Activated CD4-positive, alpha-beta memory T cell treated with anti-CD3 and anti-CD28 coated beads, Interleukin-2, amount 10 ng/mL, durations not matched to agents 7 days and 5 days (primary cell): ENCODE measurements at regions of chr2 and their contacts with region 1.

Region 1: DNA sequence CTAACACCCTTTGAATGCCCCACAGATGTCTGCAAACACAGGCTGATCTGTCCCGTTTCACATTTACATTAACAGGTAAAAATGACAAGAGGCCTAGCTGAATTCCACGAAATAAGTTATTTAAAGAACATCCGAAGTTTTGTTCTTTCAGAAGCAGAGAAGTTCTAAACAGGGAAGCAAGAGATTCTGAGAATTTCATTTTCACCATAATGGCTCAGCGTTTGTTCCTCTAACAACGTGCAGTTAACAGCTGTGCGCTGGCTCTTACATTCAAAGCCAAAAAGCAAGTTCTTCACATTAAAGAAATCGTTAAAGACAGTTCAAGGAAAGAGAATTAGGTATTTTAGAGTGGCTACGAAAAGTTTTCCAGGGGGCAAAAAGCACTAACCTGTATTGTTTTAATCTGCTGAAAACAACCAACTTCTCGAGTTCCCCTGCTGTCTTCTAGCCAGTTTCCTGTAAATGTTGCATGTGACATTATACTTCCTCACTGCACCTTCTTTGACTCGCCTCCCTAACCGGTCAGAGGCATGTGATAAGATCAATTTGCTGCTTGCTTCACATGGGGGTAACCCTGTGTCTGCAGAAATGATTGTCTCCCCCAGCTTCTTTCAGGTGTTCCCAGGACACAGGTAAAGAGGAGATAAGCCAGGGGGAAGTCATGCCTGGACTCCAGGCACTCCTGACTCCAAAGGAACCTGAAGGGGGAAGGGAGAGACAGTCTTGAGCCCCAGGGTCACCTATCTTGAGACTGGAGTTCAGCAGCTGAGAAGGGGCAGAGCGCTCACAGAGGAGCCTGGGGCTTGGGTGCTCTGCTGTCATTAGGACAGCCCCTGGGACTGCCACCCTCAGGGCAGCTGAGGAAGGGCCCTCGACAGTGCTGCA is 36.8 kb upstream of the WIPF1 start:
- DNase-seq: peak; percentile 64
- H3K4me3 Mint-ChIP-seq: peak overlapping the region; percentile 84
- H3K27ac Mint-ChIP-seq: peak overlapping the region; percentile 93
- H3K4me1 Mint-ChIP-seq: peaks cover 66% of the 10 kb centered on the region
- H3K27me3 Mint-ChIP-seq: no peaks in the 10 kb centered on the region

Region 2: GRCh38 chr2:174473796-174474195 is 160.6 kb before region 1 on chr2:
- CTCF ChIA-PET with region 1: no interaction called
- POLR2A ChIA-PET with region 1: no interaction called
- DNase-seq: no peak
- H3K4me3 Mint-ChIP-seq: no peak overlapping the region
- H3K27ac Mint-ChIP-seq: no peak overlapping the region
- H3K4me1 Mint-ChIP-seq: peaks cover 2% of the 10 kb centered on the region
- H3K27me3 Mint-ChIP-seq: no peaks in the 10 kb centered on the region

Region 3: DNA sequence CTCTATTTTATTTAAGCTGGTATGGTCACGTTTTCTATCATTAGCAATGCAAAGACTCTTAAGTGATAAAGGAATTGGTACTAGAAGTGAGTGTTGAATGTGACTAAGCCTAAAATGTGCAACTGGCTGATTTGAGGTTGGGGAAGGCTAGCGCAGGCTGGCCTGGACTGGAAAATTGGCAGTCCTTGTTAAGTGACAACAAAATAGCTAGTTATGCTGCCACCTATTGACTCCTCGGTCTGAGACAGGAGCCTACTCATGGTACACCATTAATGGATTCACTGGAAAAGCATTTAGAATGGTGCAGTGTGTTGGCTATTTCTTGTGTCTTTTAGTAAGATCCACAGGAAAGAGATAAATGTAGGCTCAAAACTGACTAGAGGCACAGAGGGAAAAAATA is 31.1 kb before region 1 on chr2:
- CTCF ChIA-PET with region 1: interaction called, 82 read pairs
- POLR2A ChIA-PET with region 1: interaction called, 558 read pairs
- DNase-seq: peak; percentile 64
- H3K4me3 Mint-ChIP-seq: no peak overlapping the region
- H3K27ac Mint-ChIP-seq: peak overlapping the region; percentile 56
- H3K4me1 Mint-ChIP-seq: peaks cover 90% of the 10 kb centered on the region
- H3K27me3 Mint-ChIP-seq: no peaks in the 10 kb centered on the region

Region 4: GRCh38 chr2:174654419-174654941 is 20.1 kb after region 1 on chr2:
- CTCF ChIA-PET with region 1: interaction called, 12 read pairs
- POLR2A ChIA-PET with region 1: interaction called, 15 read pairs
- DNase-seq: no peak
- H3K4me3 Mint-ChIP-seq: no peak overlapping the region
- H3K27ac Mint-ChIP-seq: no peak overlapping the region
- H3K4me1 Mint-ChIP-seq: peaks cover 21% of the 10 kb centered on the region
- H3K27me3 Mint-ChIP-seq: no peaks in the 10 kb centered on the region

Region 5: DNA sequence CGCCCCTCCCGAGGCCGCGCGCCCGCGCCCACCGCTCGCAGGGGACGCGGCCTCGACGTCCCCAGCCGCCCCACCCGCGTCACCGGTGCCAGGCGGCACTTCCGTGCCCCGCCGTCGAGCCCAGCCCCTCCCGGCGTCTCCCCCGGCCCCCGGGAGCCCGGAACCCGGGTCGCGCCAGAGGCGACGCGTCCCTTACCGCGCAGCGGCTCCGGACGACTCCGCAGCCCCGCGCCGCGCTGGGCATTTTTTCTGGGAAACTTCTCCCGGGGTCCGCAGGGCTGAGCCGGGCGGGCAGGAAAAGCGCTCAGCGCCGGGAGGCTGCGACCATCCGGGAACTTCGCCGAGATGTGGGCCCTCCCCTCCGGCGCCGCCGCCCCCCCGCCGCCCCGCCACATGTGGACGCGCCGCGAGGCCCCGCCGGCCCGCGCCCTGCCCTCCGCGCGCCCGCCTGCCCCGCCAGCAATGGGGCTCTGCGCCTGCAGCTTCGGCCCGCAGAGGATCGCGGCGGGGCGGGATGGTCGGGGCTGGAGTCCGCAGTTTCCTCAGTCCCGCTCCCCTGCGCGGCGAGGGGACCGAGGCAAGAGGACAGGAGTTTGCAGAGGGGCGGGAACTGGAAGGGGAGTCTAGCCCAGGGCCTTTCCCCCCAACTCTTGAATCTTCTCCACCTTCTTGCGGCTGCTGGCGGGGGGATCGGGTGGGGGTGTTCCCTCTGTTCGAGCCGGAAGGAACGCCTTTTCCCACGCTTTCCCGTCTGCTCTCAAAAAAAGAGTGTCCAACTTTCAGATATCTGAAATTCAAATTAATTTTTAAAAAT is 48.4 kb after region 1 on chr2:
- CTCF ChIA-PET with region 1: interaction called, 33 read pairs
- POLR2A ChIA-PET with region 1: interaction called, 73 read pairs
- DNase-seq: peak; percentile 64
- H3K4me3 Mint-ChIP-seq: peak overlapping the region; percentile 84
- H3K27ac Mint-ChIP-seq: peak overlapping the region; percentile 76
- H3K4me1 Mint-ChIP-seq: peaks cover 62% of the 10 kb centered on the region
- H3K27me3 Mint-ChIP-seq: no peaks in the 10 kb centered on the region